Activated CD4-positive, alpha-beta memory T cell treated with anti-CD3 and anti-CD28 coated beads for 36 hours (primary cell): ENCODE measurements at regions of chr22 and their contacts with region 1.

Region 1: GRCh38 chr22:40196628-40197360 is 19.1 kb downstream of the TNRC6B start:
- DNase-seq: peak; percentile 78
- H3K4me3 Mint-ChIP-seq: peak overlapping the region; percentile 53
- H3K27ac Mint-ChIP-seq: peak overlapping the region; percentile 90
- H3K4me1 Mint-ChIP-seq: peaks cover 78% of the 10 kb centered on the region
- H3K27me3 Mint-ChIP-seq: no peaks in the 10 kb centered on the region

Region 2: DNA sequence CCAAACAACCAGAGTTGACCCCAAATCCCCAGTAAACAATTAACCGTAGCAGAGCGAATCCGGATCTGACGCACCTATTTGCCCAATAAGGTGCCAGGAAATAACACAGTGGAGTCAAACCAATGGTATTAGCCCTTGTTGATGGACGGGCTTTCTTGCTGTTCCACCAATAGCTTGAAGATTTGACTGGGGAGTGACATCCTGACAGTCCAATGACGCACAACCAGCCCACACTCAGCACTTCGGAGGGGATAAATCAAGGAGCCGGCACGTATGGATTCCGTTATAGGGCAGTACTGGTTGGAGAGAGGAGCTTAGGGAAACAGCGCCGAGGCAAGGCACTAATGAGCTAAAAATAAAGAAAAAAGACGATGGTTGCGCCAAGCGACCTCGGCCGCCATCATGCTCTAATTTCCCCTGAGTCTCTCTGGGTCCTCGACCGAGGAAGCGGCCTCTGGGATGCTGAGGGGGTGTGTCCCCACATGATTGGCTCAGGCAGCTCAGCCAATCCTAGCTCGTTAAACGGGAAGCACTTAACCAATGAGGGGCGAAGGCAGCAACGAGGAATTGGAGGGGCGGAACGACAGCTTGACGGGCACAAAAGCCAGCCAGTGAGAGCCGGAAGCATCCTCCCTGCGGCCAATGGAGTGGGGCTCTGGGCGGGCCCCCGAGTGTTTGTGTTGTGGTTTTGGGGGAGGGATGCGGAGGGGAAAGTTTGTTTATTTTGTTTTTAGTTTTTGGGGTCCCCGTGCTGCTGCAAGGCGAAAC is 152.5 kb before region 1 on chr22:
- CTCF ChIA-PET with region 1: interaction called, 4 read pairs
- POLR2A ChIA-PET with region 1: interaction called, 13 read pairs
- intact Hi-C with region 1: no loop called
- DNase-seq: peak; percentile 99
- H3K4me3 Mint-ChIP-seq: peak overlapping the region; percentile 93
- H3K27ac Mint-ChIP-seq: peak overlapping the region; percentile 99
- H3K4me1 Mint-ChIP-seq: peaks cover 27% of the 10 kb centered on the region
- H3K27me3 Mint-ChIP-seq: peaks cover 6% of the 10 kb centered on the region

Region 3: DNA sequence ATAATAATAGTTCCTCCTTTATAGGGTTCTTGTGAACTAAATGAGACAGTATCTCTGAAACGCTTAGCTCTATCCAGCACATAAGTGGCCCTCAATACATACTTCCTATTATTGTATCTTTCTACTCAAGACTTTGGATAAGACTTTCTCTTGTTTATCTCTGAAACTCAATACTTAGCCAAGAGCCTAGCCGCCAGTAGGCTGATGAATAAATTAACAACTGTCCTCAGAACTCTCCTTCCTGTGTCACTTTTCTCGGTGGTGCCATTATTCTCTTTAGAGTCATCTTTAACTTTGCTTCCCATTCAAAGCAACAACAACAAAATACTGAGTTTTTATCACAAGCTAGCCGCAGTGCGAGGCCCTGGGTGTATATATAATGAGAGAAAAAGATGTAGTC is 115.1 kb before region 1 on chr22:
- CTCF ChIA-PET with region 1: no interaction called
- POLR2A ChIA-PET with region 1: no interaction called
- intact Hi-C with region 1: no loop called
- DNase-seq: no peak
- H3K4me3 Mint-ChIP-seq: no peak overlapping the region
- H3K27ac Mint-ChIP-seq: no peak overlapping the region
- H3K4me1 Mint-ChIP-seq: peaks cover 30% of the 10 kb centered on the region
- H3K27me3 Mint-ChIP-seq: no peaks in the 10 kb centered on the region

Region 4: GRCh38 chr22:40183029-40183581 is 13.7 kb before region 1 on chr22:
- CTCF ChIA-PET with region 1: interaction called, 9 read pairs
- POLR2A ChIA-PET with region 1: interaction called, 32 read pairs
- intact Hi-C with region 1: loop called (anchors 1 kb)
- DNase-seq: peak; percentile 48
- H3K4me3 Mint-ChIP-seq: peak overlapping the region; percentile 49
- H3K27ac Mint-ChIP-seq: peak overlapping the region; percentile 73
- H3K4me1 Mint-ChIP-seq: peaks cover 65% of the 10 kb centered on the region
- H3K27me3 Mint-ChIP-seq: no peaks in the 10 kb centered on the region

Region 5: DNA sequence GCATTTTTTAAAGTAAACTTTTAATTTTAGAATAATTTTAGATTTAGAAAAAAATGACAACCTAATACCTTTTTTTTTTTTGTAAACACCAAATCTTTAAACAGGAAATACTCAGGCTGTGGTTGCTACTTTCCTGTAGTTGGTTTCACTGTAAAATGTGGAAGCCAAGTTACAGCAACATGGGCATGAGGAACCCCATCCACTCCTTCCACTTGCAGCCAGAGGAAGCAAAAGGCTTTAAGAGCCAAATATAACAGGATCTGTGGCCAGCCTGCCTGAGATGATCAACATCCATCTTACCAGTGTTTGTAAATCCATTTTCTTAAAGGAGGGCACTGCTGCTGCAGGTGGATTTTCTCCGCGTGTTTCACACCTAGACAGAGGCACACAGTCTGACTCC is 47.1 kb after region 1 on chr22:
- CTCF ChIA-PET with region 1: no interaction called
- POLR2A ChIA-PET with region 1: interaction called, 3 read pairs
- intact Hi-C with region 1: loop called (anchors 5 kb)
- DNase-seq: no peak
- H3K4me3 Mint-ChIP-seq: no peak overlapping the region
- H3K27ac Mint-ChIP-seq: peak overlapping the region; percentile 42
- H3K4me1 Mint-ChIP-seq: peaks cover 81% of the 10 kb centered on the region
- H3K27me3 Mint-ChIP-seq: no peaks in the 10 kb centered on the region